ENCODE measurements at regions of chr21 and their contacts with region 1.

Region 1: GRCh38 chr21:38925923-38926322 is 120.2 kb downstream of the ETS2 start:
- DNase-seq: no peak
- CTCF ChIP-seq: no peak

Region 2: GRCh38 chr21:38798481-38798882 is 127.4 kb before region 1 on chr21:
- CTCF ChIA-PET with region 1: no interaction called
- POLR2A ChIA-PET with region 1: no interaction called
- DNase-seq: no peak
- CTCF ChIP-seq: no peak

Region 3: DNA sequence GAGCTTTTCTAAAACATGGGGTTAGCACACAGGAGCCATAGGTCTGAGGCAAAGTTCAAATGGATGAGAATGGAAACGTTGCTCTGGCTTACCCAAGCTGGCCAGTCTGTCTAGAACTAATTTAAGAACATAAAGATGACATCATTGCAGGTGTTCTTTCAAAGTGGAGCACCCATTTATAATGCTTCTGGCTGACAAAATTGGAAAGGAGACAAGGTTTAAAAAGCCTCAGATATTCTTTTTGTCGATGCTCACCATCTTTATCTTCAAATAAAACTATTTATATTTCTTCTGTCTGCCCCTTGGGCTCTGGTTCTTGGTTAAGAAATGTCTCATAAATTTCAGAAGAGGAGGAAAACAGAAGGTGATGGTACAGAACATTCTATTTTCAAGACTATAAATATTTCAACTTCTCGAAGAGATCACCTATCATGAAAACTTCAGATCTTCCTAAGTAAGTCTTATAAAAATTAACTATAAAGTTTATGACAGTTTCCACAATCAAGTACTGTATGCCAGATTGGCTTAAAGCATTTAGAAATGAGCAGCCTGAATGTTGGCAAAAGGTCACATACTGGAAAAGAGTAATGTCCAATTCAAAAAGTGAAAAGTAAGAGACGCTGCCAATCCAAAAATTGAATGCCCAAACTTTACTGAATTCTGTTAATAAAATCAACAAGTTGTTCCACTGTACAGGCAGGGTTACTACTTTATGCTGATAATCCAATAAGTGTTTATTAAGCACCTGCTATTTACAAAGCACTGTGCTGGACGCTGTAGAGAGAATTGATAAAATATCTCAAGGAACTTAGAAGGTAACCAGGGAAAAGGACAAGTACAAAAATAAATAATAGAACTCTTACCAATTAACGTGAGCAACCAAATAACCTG is 28.1 kb before region 1 on chr21:
- CTCF ChIA-PET with region 1: no interaction called
- POLR2A ChIA-PET with region 1: no interaction called
- DNase-seq: no peak
- CTCF ChIP-seq: no peak

Region 4: DNA sequence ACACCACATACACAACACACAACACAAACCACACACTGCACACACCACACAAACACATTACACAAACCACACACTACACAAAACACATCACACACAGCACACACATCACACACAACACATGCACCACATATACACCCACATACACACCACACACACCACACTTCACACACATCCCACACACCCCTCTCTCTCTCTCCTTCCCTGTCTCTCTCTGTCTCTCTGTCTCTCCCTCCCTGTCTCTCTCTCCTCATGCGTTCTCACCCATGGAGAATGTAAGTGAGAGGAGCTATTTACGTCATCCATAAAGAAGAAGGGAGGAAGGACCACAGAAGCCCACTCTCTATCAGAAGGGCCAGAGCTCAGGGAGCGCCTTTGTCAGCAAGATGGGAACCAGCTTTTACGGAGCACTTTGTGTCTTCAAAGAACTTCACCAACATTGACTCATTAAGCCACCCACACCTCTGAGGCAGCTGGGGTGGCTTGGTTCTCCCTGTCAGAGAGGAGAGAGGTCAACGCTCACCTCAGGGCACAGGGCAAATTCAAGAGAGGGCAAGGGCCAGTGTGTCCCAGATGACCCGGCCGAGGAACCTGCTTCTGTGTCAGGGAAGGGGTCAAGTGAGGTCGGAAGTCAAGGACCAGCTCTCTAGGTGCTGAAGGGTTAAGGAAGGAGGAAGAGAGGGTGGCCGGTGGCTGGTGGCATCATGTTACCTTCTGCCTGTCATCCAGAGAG is 11.5 kb before region 1 on chr21:
- CTCF ChIA-PET with region 1: interaction called, 13 read pairs
- POLR2A ChIA-PET with region 1: no interaction called
- DNase-seq: no peak
- CTCF ChIP-seq: no peak

Region 5: GRCh38 chr21:38942748-38943211 is 16.9 kb after region 1 on chr21:
- CTCF ChIA-PET with region 1: no interaction called
- POLR2A ChIA-PET with region 1: no interaction called
- DNase-seq: no peak
- CTCF ChIP-seq: no peak

Region 6: GRCh38 chr21:39037807-39038405 is 112.0 kb after region 1 on chr21:
- CTCF ChIA-PET with region 1: no interaction called
- POLR2A ChIA-PET with region 1: no interaction called
- DNase-seq: no peak
- CTCF ChIP-seq: no peak

Measured in GM10248 (cell line).